Activated CD4-positive, alpha-beta T cell treated with anti-CD3 and anti-CD28 coated beads, Interleukin-2, amount 10 ng/mL, durations not matched to agents 24 days and 14 days (primary cell): ENCODE measurements at regions of chr11 and their contacts with region 1.

Region 1: GRCh38 chr11:8225589-8226036 is 38.1 kb downstream of the LMO1 start:
- DNase-seq: peak; percentile 88
- H3K4me3 Mint-ChIP-seq: no peak overlapping the region
- H3K27ac Mint-ChIP-seq: no peak overlapping the region
- H3K4me1 Mint-ChIP-seq: peaks cover 1% of the 10 kb centered on the region
- H3K27me3 Mint-ChIP-seq: no peaks in the 10 kb centered on the region

Region 2: DNA sequence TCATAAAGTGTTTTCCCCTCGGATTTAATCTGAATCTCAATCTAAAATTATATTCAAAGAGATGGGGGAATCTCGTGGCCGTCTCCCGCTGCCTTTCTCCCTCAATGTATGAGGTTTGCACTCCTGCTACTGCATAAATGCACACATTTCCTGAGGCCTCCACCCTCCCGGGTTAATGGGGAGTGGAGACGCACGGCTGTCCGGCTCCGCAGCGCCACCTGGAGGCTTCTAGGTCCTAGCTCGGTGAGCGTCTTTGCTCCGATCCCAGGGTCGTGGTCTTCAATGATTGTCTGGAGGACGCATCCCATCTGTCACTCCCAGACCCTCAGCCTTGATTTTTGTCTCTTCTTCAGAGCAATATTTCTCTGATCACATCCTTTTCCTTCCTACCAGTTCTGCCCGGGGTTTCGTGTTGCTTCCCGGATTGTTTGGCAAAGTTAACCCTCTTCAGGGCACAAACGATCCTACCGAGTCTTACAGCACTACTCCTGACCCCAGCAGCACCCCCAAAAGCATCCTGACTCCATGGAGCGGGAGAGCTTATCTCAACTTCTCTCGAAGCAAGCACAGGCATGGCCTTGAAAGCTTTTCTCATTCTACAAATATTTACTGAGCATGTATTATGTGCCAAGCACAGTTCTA is 38.3 kb after region 1 on chr11 and contains the start of gene LMO1:
- intact Hi-C with region 1: loop called (anchors 1 kb)
- DNase-seq: peak; percentile 92
- H3K4me3 Mint-ChIP-seq: peak within 1 kb of the TSS; percentile 67
- H3K27ac Mint-ChIP-seq: no peak within 1 kb of the TSS
- H3K4me1 Mint-ChIP-seq: peaks cover 8% of the 10 kb centered on the region
- H3K27me3 Mint-ChIP-seq: peaks cover 72% of the 10 kb centered on the region
- total RNA-seq, gene LMO1: not detected in 2 replicates